ENCODE measurements at regions of chr1 and their contacts with region 1.

Region 1: DNA sequence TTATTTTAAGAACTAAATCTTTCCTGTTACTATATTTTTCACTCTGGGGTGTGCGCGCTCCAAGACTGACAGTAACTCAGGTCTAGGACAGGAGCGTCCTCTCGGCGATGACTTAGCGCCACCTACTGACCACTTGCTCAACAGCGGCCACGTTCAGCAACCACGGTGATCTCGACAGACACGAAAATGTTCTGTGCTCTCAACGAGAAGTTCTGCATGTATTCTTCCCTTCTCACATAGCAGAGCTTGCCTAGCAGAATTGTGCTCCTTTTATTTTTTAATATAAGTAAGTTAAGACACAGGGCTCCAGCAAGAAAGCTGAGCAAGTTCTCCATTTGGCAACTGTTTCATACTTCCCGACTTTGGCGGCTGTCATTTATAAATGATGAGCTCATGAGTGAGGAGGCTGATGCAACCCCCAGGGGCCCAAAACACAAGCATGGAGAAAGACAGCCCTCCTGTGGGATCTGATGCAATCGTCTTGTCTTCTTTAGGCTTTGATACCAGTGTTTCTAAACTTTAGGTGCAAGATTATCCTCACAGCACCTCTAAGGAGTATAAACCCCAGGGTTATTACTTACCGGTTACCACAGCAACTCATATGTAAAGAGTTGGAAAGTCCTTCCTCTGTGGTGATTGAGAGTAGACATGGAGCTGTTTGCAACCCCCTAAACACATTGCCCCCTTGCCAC is 92.6 kb downstream of the HHIPL2 start:
- DNase-seq: peak; percentile 75 to 98 (median 90)

Region 2: GRCh38 chr1:221263831-221264767 is 1191.2 kb before region 1 on chr1:
- intact Hi-C with region 1: loop called (anchors 10 kb)
- DNase-seq: peak in 7 of 10 donors; percentile 27 to 91 (median 64)

Region 3: GRCh38 chr1:221478050-221478949 is 977.0 kb before region 1 on chr1:
- intact Hi-C with region 1: loop called (anchors 5 kb)
- DNase-seq: peak; percentile 33 to 95 (median 71)

Region 4: DNA sequence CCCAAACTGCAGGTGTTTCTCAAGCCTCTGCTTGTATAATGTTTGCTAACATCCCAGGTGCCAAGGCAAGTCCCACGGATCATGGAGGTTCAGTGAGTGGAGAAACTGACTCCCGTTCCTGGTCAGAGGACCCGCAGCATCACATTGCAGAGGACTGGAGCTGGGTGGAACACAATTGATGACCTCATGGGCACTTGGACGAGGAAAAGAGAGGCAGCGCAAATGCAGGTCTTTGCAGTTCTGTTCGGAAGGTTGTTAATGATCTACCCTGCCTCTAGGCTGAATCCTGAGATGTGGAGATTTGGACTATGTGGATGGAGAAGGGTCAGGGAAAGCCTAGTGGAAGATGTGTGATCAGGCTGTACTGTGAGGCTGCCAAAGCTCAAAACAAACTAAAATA is 906.4 kb before region 1 on chr1:
- intact Hi-C with region 1: loop called (anchors 5 kb)
- DNase-seq: no peak

Region 5: DNA sequence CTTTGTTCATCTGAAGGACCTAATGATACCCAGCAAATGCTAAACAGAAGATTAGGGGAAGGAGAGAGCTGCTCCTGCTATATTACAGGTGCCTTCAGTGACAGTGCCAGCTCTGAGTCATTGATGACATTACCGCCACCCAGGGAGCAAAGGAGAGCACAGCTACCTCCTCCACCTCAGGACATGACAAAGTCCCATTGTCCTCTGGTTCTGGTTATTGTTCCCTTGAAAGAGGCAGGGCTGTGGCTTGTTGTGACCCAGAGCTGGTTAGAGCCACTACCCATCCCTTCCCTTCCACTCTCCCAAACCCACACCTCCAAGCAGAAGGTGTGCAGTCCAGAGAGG is 350.0 kb before region 1 on chr1:
- intact Hi-C with region 1: loop called (anchors 10 kb)
- DNase-seq: no peak

Region 6: DNA sequence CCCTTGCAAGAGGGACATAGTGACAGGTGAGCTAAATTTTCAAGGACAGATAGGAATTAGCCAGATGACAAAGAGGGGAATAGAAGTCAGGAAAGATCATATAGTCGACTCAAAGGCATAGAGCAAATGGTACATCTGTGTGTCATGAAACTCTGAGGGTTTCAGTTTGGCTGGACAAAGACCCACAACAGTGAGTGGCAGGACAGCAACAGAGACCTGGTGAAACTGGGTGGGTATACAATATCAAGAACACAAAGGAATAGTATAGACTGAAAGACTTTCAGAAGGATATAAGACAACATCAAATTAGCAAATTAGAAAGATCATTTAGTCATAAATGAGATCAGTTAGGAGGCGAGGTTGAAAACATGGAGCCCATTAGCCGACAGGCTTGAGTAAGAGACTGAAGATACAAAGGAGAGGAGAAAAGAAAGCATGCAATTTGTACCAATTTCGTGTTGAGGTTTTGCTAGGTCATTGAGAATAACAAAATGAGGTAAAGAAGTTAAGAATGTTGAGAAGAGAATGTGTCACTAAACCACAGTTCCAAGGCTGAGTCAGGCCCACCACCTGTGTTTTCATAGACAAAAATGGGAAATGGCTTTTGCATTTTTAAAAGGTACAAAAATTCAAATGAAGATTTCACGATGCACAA is 121.2 kb before region 1 on chr1:
- intact Hi-C with region 1: no loop called
- DNase-seq: no peak

Region 7: DNA sequence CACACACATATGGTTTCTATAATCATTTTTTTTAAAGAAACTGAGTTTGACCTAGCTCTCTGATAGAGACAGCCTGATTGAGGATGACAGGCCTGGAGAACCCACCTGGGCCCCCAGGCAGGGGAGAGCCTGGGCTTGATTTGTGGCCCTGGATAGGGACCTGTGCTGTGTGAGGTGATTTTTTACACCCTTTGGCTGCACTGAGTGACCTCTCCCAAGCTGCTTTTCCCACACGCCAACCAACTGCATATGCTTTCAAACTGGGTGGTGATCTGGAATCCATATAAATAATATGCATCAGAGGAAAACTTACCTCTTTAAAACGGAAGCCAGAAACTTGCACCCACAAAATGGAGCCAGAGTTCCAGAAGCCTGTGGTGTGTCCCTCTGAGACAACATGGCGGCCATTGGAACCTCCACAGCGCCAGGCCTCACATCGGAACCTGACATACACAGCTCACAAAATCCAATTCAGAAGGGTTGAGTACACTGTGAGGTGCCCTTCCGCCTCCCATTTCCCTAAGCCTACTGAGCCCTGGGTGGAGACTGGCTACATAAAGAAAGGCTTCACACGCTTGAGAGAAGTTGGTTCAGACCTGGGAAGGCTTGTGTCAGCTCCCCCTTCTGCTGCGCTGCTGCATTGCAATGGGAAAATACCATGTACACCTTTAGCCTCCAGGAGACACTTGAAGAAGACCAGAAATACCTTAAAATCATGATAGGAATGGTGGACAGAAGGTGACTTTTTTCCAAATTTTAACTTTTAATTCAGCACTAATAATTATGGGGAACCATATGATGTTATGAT is 68.1 kb before region 1 on chr1:
- intact Hi-C with region 1: no loop called
- DNase-seq: no peak